AG04450 (cell line): ENCODE measurements at regions of chr10 and their contacts with region 1.

Region 1: GRCh38 chr10:116787893-116788665 is 45.7 kb upstream of the HSPA12A start:
- DNase-seq: peak; percentile 27
- H3K4me3 ChIP-seq: peak overlapping the region; percentile 48
- H3K27ac ChIP-seq: no peak overlapping the region
- H3K27me3 ChIP-seq: peaks cover 3% of the 10 kb centered on the region
- CTCF ChIP-seq: peak; percentile 99

Region 2: DNA sequence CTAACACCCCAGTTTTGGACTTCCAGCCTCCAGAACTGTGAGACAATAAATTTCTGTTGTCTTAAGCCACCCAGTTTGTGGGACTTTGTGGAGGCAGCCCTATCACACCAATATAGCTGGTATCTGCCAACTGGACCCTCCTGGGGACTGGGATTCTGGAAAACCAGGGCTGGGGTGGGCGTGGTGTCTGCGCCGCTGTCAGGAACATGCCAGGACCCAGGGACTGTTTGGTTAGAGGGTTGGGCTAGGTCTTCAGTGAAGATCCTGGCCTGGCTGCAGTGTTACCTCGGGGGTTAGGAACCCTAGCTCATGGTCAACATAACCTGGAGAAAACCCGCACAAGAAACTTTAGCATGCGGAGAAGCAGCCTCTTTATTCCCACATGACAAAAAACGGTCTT is 124.7 kb before region 1 on chr10:
- CTCF ChIA-PET with region 1: interaction called, 12 read pairs
- POLR2A ChIA-PET with region 1: interaction called, 6 read pairs
- DNase-seq: no peak
- H3K4me3 ChIP-seq: no peak overlapping the region
- H3K27ac ChIP-seq: no peak overlapping the region
- H3K27me3 ChIP-seq: peaks cover 2% of the 10 kb centered on the region
- CTCF ChIP-seq: no peak

Region 3: DNA sequence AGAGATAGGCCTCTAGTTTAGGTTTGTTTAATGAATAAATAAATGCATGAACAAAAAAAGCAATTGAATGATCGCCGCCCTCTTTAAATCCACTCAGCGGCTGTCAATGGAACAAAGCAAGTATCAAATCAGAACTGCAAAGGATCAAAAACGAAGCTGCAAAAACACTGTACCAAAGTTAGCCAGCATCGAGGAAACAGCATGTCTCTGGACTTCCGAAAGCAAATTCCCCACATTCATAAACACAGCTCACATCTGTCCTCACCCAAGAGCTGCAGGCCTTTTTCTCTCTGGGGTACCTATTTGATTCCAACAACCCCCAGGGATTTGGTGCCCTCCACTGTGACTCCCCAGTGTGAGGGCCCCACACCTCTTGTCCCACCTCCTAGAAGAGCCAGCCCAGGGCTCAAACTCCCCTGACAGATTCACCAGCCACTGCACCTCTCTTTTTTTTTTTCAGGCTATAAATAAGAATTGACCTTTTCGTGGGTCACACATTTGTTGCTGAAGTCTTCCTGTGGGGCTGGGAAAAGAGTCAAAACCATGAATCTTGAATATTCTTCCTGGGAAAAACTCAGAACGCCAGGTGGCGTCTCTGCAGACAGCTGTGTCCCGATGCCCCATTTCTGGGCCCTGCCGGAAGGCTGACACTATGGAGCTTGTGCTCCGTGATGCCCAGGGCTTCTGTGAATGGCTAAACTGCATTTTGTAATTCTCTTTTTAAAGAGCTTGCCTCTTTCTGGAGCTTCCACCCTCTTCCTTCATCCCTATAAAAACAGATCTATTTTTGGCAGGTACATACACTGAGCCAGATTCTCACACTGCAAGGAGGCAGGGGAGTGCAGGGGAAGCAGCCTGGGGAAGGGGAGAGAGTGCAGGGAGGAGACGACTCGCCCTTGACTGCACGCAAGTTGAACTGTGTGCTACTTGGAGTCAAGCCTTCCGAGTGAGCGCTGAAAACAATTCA is 97.4 kb before region 1 on chr10:
- CTCF ChIA-PET with region 1: interaction called, 426 read pairs
- POLR2A ChIA-PET with region 1: no interaction called
- DNase-seq: no peak
- H3K4me3 ChIP-seq: no peak overlapping the region
- H3K27ac ChIP-seq: no peak overlapping the region
- H3K27me3 ChIP-seq: no peaks in the 10 kb centered on the region
- CTCF ChIP-seq: peak; percentile 47

Region 4: GRCh38 chr10:116742367-116743265 is 45.5 kb before region 1 on chr10 and contains the start of gene HSPA12A:
- CTCF ChIA-PET with region 1: interaction called, 12 read pairs
- POLR2A ChIA-PET with region 1: no interaction called
- DNase-seq: peak; percentile 59
- H3K4me3 ChIP-seq: peak within 1 kb of the TSS; percentile 79
- H3K27ac ChIP-seq: peak within 1 kb of the TSS; percentile 65
- H3K27me3 ChIP-seq: no peaks in the 10 kb centered on the region
- CTCF ChIP-seq: no peak
- polyA plus RNA-seq, gene HSPA12A: 20.0 and 20.5 TPM in 2 replicates

Region 5: DNA sequence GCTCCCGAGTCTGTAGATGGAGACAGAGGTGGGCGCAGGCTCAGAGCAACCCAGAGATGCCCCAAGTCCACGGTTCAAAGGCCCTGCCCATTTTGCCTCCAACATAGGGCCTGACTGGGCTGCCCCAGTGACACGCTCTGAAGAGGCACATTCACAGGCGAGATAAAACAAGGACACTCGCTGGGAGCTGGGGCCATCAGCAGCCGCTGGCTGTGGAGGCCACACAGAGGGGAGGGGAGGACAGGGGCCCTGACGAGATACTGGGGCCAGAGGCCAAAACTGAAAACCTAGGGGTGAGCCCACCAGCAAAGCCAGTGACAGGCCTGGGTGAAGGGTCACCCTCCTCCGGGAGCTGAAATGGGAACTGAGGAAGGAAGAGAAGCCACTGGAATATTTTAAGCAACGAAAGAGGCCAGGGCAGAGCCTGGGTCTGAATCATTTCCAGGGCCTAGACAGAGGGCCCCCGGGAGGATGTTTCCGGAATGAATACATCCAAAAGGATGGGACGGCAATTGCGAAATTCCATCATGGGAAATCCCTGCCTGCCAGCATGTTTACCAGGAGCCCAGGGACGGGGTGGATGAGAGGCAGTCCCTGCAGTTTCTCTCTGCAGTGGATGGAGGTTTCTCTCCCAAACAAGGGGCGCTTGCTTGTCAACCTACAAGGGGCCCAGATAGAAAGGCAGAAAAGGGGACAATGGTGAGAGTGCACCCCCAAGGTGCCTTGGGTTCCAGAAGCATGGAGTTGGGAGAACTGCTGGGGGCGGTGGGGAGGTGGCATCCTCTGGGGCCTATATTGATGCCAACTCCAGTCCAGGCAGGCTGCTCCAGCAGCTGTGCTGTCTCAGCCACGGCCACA is 16.7 kb before region 1 on chr10:
- CTCF ChIA-PET with region 1: interaction called, 39 read pairs
- POLR2A ChIA-PET with region 1: no interaction called
- DNase-seq: peak; percentile 76
- H3K4me3 ChIP-seq: no peak overlapping the region
- H3K27ac ChIP-seq: peak overlapping the region; percentile 90
- H3K27me3 ChIP-seq: no peaks in the 10 kb centered on the region
- CTCF ChIP-seq: no peak

Region 6: GRCh38 chr10:116852245-116852644 is 64.2 kb after region 1 on chr10:
- CTCF ChIA-PET with region 1: no interaction called
- POLR2A ChIA-PET with region 1: no interaction called
- DNase-seq: no peak
- H3K4me3 ChIP-seq: no peak overlapping the region
- H3K27ac ChIP-seq: no peak overlapping the region
- H3K27me3 ChIP-seq: peaks cover 14% of the 10 kb centered on the region
- CTCF ChIP-seq: no peak